ENCODE measurements at regions of chr9 and their contacts with region 1.

Region 1: DNA sequence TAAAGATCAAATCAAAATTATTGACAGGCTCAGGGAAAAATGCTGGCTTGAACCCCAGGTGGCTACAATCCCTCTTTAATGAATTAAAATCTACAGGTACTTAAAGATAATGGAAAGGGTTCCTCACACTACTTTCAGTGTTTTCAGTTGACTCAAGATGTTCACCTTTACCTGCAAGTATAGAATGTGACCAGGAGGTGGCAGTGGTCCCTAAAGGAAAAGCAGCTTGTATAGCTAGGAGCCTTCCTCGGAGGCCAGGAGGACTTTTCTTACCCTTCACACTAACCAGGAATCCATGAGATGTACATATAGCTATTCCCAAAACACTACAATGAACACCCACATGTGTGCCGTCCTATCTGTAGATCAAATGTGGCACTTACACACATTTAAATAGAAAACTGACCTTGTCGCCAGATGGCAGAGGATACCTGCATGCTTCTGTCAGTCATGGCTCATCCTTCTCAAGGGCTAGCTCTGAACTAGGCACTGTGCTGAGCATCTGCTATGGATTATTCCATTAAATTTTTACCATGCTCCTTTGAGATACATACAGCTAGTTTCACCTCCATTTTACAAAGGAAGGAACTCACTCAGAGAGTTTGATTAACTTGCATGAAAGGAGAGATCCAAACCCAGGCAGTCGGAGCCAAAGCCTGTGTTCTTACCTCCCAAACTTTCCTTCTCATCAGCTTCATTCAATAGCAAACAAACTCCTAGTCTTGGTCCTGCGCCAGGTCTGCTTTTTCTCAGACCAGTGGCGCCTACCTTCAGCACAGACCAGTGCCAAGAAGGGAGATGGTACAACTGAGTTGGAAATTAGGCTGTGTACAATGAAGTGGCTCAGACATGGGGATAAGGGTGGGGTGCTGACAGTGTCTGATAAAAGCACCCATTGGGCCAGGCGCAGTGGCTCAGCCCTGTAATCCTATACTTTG is 24.5 kb downstream of the C9orf152 start:
- DNase-seq: peak in 5 of 10 donors; percentile 26 to 62 (median 54)

Region 2: DNA sequence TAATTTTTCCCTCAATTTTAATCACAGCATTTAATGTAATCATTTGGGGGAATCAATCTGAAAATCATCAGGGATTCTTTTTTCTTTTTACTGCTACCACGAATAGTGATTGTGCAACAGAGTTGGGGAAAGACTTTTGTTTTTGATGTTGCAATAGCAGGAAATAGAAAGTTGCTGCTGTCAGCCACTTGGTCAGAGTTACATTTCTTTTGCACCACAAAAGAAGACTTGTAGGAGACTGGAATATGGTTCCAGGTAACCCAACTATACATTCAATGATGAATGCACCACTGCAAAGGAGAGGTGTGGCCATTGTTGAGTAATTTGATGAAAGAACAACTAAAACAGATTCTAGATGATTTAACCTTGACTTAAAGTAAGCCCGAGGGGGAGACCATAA is 449.8 kb before region 1 on chr9:
- intact Hi-C with region 1: no loop called
- DNase-seq: no peak

Region 3: DNA sequence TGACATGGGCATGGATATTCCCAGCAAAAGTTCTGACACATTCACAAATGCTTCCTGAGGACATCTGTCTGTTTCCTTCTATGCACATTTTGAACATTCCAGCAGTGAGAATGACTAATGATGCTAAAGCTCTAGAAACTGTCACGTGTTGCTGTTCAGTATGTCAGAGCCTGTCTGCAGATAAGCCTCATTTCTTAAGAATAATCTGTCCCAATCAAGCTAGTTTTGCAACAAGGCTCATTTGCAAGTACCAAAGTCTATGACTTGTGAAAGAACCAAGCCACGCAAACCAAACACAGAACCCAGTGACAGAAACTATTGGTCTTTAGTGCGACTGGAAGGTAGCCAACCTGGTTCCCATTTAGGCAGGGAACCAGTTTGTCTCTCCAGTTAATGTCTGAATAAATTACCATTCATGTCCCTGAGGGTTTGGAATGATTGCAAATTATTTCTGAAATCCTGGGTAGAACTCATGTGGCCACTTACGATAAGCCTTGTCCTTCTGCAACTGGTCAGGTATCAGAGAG is 154.0 kb before region 1 on chr9:
- intact Hi-C with region 1: no loop called
- DNase-seq: no peak

Region 4: DNA sequence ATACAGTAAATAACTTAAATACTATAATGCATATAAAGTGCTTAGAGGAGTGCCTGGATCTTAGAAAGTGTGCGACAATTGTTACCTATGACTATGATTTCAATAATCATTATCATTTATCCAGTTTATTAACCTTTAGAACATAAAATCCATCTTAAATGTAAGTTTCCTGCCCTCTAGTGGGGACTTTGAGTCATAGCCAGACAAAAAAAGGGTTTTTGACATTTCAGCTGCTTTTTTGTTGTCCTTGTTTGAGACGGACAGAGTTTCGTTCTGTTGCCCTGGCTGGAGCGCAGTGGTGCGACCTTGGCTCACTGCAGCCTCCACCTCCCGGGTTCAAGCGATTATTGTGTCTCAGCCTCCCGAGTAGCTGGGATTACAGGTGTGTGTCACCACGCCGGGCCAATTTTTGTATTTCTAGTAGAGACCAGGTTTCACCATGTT is 34.2 kb after region 1 on chr9:
- intact Hi-C with region 1: loop called (anchors 2 kb)
- DNase-seq: no peak

Region 5: DNA sequence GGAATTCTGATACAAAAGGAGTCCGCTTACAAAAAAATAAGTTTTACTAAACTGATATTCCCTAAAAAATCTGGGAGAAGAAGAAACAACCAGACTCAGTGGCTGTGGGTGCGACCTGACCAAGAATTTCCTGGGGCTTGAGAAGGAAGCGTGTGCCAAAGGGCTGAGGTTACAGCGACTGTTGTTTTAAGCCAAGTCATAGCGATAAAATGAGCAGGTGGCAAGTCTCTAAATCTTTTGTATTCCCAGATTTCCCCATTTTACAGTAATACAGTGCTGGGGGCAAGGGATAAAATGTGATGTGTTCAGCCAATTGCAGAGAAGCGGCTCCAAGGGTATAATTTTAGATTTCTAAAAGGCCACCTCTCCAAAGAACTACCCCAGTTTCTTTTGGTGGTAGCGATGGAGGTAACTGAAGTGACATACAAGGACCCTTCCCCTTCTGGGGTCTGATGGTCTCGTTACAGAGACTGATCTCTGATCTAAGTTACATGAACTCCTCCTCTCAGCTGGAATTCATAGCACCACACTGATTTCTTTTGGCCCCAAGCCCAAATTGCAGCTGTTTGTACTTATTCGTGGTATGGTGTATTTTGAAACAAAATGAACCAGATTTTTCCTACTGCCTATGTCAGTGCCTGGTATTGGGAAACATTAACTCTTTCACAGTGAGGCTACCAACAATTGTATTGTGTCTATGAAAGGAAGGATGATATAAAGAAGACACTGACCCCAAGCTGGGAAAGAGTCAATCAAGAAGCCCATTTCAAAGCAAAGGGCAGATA is 813.2 kb after region 1 on chr9:
- intact Hi-C with region 1: no loop called
- DNase-seq: peak in 1 of 10 donors; percentile 37

Measured in posterior cingulate gyrus (tissue), 11 donors.